ENCODE measurements at regions of chr13 and their contacts with region 1.

Region 1: GRCh38 chr13:24187185-24187584 is 26.7 kb downstream of the SPATA13 start:
- DNase-seq: no peak
- ATAC-seq: no peak
- H3K4me3 ChIP-seq: no peak overlapping the region
- H3K27ac ChIP-seq: no peak overlapping the region
- H3K4me1 ChIP-seq: peaks cover 0 to 11% (median 0%) of the 10 kb centered on the region in 9 donors
- H3K27me3 ChIP-seq: no peaks in the 10 kb centered on the region
- CTCF ChIP-seq: no peak

Region 2: DNA sequence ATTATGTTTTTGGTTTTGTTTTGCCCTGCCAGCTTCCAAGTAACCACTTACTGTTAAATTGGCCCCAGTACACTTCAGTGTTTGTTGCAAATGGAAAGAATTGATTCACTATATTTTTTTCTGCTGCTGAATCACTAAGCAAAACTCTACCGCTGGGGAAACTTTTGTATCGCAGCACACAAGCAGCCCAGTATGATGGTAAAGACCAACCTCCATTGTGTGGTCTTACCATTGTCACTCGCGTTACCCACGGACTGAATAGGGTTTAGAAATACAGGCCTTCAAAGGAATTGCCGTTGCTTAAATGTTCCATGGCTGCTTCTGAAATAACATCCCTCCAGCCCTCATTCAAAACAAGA is 18.8 kb before region 1 on chr13:
- intact Hi-C with region 1: loop called in 1 of 10 experiments (anchors 2 kb)
- DNase-seq: no peak
- ATAC-seq: no peak
- H3K4me3 ChIP-seq: no peak overlapping the region
- H3K27ac ChIP-seq: no peak overlapping the region
- H3K4me1 ChIP-seq: peaks cover 0 to 30% (median 0%) of the 10 kb centered on the region in 9 donors
- H3K27me3 ChIP-seq: peaks cover 0 to 4% (median 0%) of the 10 kb centered on the region in 7 donors
- CTCF ChIP-seq: no peak

Measured in heart right ventricle (tissue), 16 donors.